Activated T-helper 2 cell treated with anti-CD3 and anti-CD28 coated beads, Interferon-gamma antibody, Interleukin-2, Interleukin-4, amounts not matched to agents 10 μg/mL and 5 μg/mL and 100 μg/mL, durations not matched to agents 14 hours and 24 hours and 36 hours (primary cell): ENCODE measurements at regions of chr11 and their contacts with region 1.

Region 1: DNA sequence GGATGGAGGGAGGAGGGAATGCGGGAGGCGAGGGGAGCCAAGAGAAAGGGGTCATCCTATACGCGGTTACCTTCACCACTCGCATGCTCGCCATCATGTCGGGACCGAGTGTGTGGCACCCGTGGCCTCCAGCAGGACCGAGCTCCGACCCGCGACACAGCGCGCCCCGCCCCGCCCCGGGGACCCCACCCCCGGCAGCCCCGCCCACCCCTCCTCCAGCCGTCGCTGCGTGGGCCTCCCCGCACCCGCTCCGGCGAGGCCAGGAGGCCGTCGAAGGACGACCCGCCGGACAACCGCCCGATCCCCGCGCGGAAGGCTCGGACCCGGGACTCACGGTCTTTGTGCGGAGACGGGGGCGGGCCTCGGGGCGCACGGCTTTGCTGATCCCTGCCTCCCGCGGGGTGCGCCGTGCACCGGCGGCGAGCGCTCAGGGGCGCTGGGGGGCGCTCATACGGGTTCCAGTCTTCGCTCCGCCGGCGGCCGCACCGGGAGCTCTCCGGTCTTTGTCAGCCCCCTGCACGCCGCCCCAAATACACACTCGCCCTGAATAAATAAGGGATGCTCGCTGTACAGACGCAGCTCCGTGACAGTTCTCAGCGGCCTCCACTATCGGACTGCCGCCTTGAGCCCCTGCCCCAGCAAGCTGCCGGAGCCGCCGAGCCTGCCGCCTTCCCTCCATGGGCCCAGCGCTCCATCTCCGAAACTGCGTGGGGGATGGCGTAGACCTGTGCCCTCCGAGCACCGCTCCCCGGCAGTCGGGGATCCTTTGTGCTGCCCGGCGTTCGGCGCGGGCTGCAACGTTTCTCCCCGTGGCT is at the start of gene UBE2L6:
- DNase-seq: peak; percentile 56
- H3K4me3 Mint-ChIP-seq: peak within 1 kb of the TSS; percentile 99
- H3K27ac Mint-ChIP-seq: peak within 1 kb of the TSS; percentile 97
- H3K4me1 Mint-ChIP-seq: peaks cover 26% of the 10 kb centered on the region
- H3K27me3 Mint-ChIP-seq: no peaks in the 10 kb centered on the region
- total RNA-seq, gene UBE2L6: 135 and 137 TPM in 2 replicates

Region 2: DNA sequence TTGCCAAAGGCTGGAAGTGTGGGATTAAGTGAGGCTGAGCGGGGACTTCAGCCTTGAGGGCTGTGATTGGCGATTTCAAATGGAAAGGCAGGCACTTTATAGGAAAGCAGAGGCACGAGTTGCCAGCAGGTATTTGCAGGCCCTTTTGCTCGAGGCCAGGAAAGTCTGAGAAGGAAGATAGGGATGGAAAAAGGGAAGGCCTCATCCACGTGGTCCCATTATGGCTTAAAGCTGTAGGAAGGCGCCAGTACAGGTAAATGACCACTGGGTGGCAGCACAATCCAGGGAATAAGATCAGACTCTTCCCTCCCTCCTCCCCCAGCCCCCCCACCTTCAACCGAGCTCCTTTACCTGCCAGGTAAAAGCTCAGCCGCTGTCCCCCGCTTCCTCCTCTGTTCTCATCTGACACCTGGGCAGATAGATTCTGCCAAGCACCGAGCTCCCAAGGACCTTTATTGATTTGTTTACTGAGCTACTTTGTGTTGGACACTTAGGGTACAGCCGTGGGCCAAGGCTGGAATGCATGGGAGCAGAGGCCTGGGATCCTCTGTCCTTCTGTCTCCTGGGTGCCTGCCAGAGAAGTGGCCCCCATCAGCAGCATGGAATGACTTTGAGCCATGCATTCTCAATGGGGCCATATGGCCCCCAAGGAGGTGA is 222.0 kb before region 1 on chr11:
- intact Hi-C with region 1: loop called (anchors 5 kb)
- DNase-seq: no peak
- H3K4me3 Mint-ChIP-seq: no peak overlapping the region
- H3K27ac Mint-ChIP-seq: no peak overlapping the region
- H3K4me1 Mint-ChIP-seq: no peaks in the 10 kb centered on the region
- H3K27me3 Mint-ChIP-seq: peaks cover 1% of the 10 kb centered on the region

Region 3: DNA sequence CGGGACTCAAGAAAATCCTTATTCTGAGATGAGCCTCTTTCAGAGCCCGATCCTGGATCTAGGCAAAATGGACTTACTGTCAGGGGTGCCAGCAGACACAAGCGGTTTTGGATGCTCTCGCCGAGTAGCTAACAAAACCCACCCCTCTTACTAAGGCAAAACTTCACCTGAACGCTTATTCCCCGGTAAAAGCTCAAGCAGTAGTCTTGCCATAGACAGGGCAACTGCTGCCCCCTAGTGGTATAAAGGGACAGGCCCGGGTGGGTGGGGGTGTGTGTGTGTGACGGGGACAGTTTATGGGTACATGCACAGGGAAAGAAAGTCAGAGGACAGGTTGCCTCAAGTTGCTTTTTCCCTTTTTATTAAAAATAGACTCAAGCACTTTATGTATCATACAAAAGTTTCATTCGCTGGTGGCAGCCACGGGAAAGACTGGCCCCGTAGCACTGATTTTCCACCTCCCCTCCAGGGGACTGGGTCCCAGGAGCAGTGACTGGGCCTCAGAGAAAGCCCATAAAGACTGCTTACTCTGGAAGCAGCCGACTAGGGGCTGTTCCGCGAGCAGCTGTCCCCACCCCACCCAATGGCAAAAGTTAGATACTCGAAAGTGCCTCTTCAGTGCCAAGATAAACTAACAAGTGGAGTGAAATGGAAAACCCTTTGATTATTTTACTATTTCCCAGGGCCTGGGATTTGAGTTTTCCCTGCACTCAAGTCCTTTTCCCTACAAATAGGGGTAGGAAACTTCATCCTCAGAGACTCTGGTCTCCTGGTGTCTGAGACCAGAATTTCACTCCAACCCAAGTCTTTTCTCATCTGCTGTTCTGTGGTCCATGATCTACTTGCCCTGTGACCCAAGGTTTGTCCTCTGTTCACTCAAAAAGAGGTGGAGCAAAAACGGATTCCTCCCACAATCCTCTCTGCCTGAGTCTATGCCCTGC is 77.3 kb after region 1 on chr11:
- intact Hi-C with region 1: loop called (anchors 1 kb)
- DNase-seq: peak; percentile 75
- H3K4me3 Mint-ChIP-seq: no peak overlapping the region
- H3K27ac Mint-ChIP-seq: no peak overlapping the region
- H3K4me1 Mint-ChIP-seq: peaks cover 48% of the 10 kb centered on the region
- H3K27me3 Mint-ChIP-seq: peaks cover 46% of the 10 kb centered on the region

Region 4: DNA sequence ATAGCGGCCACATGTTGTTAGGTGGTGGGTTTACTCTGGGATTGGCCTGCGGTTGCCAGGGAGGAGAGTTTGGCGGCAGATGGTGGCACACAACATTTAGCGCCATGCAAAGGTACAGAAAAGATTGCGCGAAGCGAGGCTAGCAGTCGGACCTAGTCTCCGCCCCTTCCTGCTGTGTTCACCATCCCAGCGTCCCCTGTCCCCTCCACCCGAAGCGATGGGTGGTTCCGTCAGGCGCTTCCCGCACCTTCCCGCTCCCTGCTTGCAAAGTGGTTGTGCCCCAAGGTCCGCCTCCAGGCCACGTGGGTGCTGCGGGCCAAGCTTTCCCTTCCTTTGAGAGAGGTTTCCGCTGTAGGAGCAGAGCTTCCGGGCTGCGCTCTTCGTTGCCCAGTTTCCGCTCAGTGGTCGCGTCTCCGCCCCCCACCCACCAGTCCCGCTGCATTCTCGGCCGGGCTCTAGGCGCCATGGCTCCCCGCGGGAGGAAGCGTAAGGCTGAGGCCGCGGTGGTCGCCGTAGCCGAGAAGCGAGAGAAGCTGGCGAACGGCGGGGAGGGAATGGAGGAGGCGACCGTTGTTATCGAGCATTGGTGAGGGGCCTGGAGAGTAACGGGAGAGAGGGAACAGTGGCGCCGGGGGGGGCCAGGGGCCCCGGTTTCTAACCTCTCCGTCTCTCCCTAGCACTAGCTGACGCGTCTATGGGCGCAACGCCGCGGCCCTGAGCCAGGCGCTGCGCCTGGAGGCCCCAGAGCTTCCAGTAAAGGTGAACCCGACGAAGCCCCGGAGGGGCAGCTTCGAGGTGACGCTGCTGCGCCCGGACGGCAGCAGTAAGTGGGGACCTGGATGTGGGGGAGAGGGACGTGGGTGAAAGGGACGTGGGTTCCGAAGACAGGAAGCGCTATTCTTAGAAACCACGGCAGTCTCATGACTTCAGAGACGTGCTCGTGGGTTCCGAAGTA is 173.7 kb after region 1 on chr11 and contains the start of gene SELENOH:
- intact Hi-C with region 1: loop called (anchors 1 kb)
- DNase-seq: peak; percentile 94
- H3K4me3 Mint-ChIP-seq: peak within 1 kb of the TSS; percentile 96
- H3K27ac Mint-ChIP-seq: peak within 1 kb of the TSS; percentile 90
- H3K4me1 Mint-ChIP-seq: peaks cover 17% of the 10 kb centered on the region
- H3K27me3 Mint-ChIP-seq: no peaks in the 10 kb centered on the region
- total RNA-seq, gene SELENOH: 179 and 183 TPM in 2 replicates

Region 5: DNA sequence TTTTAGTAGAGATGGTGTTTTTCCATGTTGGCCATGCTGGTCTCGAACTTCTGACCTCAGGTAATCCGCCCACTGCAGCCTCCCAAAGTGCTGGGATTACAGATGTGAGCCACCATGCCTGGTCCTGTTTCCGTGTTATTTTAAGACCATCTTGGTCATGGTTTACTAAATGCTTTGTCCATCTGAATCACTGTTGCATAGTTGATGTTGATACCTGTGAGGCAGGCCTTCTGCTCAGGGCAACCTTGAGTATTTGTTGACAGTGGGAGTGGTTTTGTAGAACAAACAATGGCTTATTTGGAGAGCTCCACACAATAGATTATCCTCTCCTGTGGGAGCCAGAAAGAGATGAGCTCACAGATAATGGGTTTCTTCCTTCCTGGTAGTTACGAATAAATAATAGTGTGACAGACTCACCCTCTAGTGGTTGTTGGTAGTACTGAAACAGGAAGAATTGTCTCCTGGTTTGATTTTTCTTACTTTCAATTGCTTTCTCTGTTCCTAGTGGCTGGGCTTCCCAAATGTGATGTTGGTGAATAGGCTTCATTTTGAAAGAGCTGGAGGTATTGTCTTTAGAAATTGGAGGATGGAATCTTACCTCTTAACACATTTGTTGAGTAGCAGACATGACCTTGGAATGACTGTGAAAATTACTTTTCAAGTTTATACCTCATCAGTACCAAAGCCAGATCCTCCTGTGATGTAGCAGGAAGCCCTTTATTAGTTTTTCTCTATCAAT is 232.9 kb after region 1 on chr11:
- intact Hi-C with region 1: loop called (anchors 1 kb)
- DNase-seq: no peak
- H3K4me3 Mint-ChIP-seq: no peak overlapping the region
- H3K27ac Mint-ChIP-seq: peak overlapping the region; percentile 53
- H3K4me1 Mint-ChIP-seq: peaks cover 29% of the 10 kb centered on the region
- H3K27me3 Mint-ChIP-seq: no peaks in the 10 kb centered on the region